Activated naive CD4-positive, alpha-beta T cell treated with anti-CD3 and anti-CD28 coated beads for 36 hours (primary cell): ENCODE measurements at regions of chr5 and their contacts with region 1.

Region 1: GRCh38 chr5:74576941-74577456 is 63.5 kb downstream of the ENC1 start:
- DNase-seq: peak; percentile 13
- H3K4me3 Mint-ChIP-seq: no peak overlapping the region
- H3K27ac Mint-ChIP-seq: no peak overlapping the region
- H3K4me1 Mint-ChIP-seq: peaks cover 36% of the 10 kb centered on the region
- H3K27me3 Mint-ChIP-seq: peaks cover 1% of the 10 kb centered on the region

Region 2: GRCh38 chr5:73902327-73903051 is 674.5 kb before region 1 on chr5:
- CTCF ChIA-PET with region 1: no interaction called
- intact Hi-C with region 1: loop called (anchors 5 kb)
- DNase-seq: peak; percentile 9
- H3K4me3 Mint-ChIP-seq: no peak overlapping the region
- H3K27ac Mint-ChIP-seq: no peak overlapping the region
- H3K4me1 Mint-ChIP-seq: peaks cover 3% of the 10 kb centered on the region
- H3K27me3 Mint-ChIP-seq: peaks cover 23% of the 10 kb centered on the region

Region 3: GRCh38 chr5:74316064-74316679 is 260.8 kb before region 1 on chr5:
- CTCF ChIA-PET with region 1: no interaction called
- intact Hi-C with region 1: loop called (anchors 2 kb)
- DNase-seq: peak; percentile 52
- H3K4me3 Mint-ChIP-seq: no peak overlapping the region
- H3K27ac Mint-ChIP-seq: no peak overlapping the region
- H3K4me1 Mint-ChIP-seq: peaks cover 9% of the 10 kb centered on the region
- H3K27me3 Mint-ChIP-seq: peaks cover 18% of the 10 kb centered on the region

Region 4: DNA sequence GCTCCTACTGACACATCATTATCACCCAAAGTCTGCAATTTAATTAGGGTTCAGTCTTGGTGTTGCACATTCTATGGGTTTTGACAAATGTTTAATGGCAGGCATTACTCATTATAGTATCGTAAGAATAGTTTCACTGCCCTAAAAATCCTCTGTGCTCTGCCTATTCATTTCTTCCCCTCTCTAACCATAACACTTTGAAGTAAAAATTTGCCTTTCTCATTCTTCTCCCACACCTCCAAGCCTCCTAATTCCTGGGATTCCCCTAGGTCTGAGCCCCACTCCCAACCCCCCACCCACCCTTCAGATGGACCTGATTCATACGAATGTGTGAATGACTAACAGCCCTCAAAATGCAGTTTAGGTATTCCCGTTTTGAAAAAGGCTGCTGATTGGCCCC is 45.1 kb after region 1 on chr5:
- CTCF ChIA-PET with region 1: no interaction called
- intact Hi-C with region 1: loop called (anchors 1 kb)
- DNase-seq: peak; percentile 59
- H3K4me3 Mint-ChIP-seq: no peak overlapping the region
- H3K27ac Mint-ChIP-seq: no peak overlapping the region
- H3K4me1 Mint-ChIP-seq: peaks cover 14% of the 10 kb centered on the region
- H3K27me3 Mint-ChIP-seq: peaks cover 34% of the 10 kb centered on the region

Region 5: DNA sequence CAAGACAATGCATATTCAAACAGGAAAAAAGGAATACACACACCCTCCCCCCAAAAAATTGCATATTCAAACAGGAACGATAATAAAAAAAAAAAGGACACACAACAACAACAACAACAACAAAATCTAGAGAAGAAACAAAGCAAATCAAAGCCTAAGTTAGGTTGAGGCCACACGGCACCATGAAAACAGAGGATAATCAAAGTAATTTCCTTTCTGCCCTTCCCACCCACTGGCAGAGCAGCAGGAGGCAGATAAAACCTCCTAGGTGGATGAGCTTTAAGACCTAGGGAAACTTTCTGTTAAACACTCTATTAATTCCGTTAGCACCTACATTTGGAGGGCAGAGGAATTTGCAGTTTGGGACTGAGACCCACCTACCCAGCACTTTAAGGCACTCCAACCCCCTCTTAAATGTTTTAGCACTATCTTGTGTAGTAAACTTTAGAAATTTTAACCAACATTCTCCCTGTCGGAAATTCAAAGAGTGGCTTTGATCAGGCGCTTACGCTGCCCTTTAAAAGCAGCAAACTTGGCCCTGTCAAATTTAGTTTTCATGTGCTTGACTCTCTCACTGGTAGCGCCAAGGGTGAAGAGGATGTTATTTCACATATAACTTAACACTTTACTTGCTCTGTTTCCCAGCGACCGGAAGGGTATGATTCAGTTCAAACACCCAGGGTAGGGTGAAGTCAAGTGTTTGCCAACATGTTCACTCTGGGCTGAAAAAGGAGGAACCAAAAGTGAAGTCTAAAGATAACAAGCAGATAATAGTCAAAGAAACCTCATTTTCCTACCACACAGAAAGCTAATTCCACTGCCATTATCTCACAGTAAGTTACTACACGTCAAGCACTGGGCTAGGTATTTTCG is 54.3 kb after region 1 on chr5:
- CTCF ChIA-PET with region 1: interaction called, 3 read pairs
- intact Hi-C with region 1: loop called (anchors 1 kb)
- DNase-seq: peak; percentile 61
- H3K4me3 Mint-ChIP-seq: no peak overlapping the region
- H3K27ac Mint-ChIP-seq: peak overlapping the region; percentile 65
- H3K4me1 Mint-ChIP-seq: peaks cover 25% of the 10 kb centered on the region
- H3K27me3 Mint-ChIP-seq: peaks cover 2% of the 10 kb centered on the region